ENCODE measurements at regions of chr1 and their contacts with region 1.

Region 1: DNA sequence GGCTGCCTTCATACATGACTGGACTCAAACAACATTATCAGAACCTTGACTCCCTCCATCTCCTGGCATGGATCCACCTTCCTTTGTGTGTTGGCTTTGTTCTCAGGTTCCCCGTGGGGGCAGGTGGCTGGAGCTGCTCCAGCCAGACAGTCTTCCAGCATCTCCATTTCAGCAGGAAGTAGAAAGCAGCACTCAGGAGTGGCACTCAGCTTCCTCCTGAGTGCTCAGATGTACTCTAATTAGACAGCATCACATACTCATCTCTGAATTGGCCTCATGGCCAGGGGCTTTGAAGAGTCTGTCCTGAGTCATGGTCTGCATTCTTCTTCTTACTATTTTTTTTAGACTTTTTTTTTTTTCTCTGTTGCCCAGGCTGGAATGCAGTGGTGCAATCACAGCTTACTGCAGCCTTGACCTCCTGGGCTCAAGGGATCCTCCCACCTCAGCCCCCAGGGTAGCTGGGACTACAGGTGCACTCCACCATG is 27.9 kb downstream of the OVAAL start:
- DNase-seq: peak; percentile 84
- H3K4me3 ChIP-seq: no peak overlapping the region
- H3K27ac ChIP-seq: peak overlapping the region; percentile 85
- H3K4me1 ChIP-seq: peaks cover 23% of the 10 kb centered on the region
- H3K27me3 ChIP-seq: no peaks in the 10 kb centered on the region
- CTCF ChIP-seq: no peak

Region 2: DNA sequence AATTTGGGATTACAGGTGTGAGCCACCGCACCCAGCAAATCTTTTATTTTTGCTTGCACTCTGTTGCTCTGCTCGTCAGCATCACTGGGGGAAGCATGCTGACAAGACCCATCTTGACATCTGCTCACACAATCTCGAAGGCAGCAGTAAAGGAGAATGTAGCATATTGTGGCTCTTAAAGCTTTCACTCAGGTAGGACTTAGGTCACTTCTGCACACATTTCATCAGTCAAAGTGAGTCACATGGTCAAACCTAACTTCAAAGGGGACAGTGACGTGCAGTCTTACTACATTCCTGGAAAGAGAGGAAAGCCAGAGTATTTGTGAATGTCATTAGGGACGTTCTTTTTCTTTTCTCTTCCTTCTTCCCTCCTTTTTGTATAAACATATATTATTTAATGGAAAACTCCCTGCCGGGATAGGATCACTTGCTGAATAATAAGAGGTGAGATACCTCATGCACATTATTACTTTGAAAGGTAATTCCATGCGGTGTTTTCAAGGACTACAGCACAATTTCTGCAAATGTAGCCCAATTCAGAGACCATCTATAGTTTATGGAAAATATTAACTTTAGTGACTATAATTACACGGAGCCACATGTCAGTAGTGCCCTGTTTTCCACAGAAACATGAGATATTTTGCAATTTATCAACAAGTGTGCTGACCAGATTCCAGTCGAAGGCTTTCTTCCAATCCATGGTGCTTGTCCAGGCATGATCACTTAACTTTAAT is 65.1 kb before region 1 on chr1:
- CTCF ChIA-PET with region 1: no interaction called
- dilution Hi-C with region 1: loop called (anchors 10 kb)
- in situ Hi-C with region 1: no loop called
- intact Hi-C with region 1: loop called (anchors 5 kb)
- DNase-seq: peak; percentile 79
- H3K4me3 ChIP-seq: no peak overlapping the region
- H3K27ac ChIP-seq: peak overlapping the region; percentile 82
- H3K4me1 ChIP-seq: peaks cover 47% of the 10 kb centered on the region
- H3K27me3 ChIP-seq: no peaks in the 10 kb centered on the region
- CTCF ChIP-seq: no peak

Region 3: DNA sequence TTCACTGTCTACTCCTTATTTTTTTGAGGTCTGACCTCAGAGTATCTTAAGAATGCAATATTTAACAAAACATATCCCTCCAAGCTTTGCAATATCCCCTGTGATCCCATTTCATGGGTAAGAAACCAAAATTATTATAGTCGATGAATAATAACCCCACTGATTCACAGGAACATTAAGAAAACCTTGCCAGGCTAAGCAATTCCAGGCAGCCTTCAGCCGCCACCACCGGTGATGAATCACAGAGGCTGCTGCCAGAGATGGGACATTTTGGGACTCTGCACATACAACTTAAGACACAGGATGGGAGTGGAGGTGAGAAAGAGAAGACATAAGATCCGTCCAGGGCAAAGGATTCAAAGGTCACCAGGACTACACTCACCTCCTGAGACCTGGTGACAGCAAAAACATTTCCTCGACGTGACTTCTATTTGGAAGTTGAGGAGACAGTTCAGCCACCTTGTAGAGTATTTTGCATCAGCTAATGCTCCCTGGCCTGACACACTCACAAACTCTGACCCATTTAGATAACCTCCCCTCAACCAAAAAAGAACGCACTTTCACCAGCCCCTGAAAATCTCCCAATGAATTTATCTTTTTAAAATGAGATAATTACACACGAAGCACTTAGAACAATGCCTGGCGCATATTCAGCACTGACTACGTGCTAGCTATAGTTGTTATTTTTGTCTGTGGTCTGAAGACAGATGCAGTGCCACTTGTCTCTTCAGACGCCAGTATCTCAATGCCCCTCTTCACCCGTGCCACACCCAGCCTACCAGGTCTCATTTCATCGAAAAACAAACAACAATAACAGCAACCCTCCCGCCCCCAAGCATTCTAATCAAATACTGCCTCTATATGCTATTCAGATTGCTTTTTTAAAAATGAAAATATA is 45.8 kb before region 1 on chr1:
- CTCF ChIA-PET with region 1: no interaction called
- dilution Hi-C with region 1: no loop called
- in situ Hi-C with region 1: no loop called
- intact Hi-C with region 1: no loop called
- DNase-seq: peak; percentile 60
- H3K4me3 ChIP-seq: no peak overlapping the region
- H3K27ac ChIP-seq: no peak overlapping the region
- H3K4me1 ChIP-seq: peaks cover 18% of the 10 kb centered on the region
- H3K27me3 ChIP-seq: no peaks in the 10 kb centered on the region
- CTCF ChIP-seq: no peak

Region 4: DNA sequence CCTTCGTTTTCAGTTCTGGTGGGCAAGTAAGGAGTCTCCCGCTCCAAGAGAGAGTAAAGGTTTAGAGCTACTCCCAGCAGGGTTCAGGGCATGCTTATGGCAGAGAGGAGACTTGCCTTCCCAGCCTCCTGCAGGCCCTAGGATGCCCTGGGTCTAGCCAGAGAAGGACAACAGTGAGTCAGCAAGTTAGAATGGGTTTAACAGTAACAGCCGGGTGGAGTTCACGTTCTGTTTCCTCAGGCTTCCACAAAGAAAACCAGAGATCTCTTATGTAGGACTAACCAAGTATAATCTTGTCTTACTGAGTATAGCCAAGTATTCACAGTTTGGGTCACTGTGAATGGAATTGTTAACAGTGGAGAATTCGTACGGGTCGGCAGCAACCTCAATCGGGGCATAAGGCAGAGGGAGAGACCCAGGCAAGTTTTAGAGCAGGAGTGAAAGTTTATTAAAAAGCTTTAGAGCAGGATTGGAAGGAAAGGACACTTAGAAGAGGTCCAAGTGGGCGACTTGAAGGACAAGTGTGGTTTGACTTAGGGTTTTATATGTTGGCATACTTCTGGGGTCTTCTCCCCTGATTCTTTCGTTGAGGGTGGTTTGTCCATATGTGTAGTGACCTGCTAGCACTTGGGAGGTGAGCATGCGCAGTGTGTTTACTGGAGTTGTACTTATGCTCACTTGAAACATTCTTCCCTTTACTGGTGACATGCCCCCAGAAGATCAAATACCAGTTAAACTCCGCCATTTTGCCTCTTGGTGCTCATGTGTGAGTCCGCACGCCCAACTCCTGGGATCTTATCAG is 23.5 kb before region 1 on chr1:
- CTCF ChIA-PET with region 1: no interaction called
- dilution Hi-C with region 1: no loop called
- in situ Hi-C with region 1: no loop called
- intact Hi-C with region 1: no loop called
- DNase-seq: peak; percentile 61
- H3K4me3 ChIP-seq: no peak overlapping the region
- H3K27ac ChIP-seq: no peak overlapping the region
- H3K4me1 ChIP-seq: peaks cover 29% of the 10 kb centered on the region
- H3K27me3 ChIP-seq: no peaks in the 10 kb centered on the region
- CTCF ChIP-seq: no peak